CD4-positive, alpha-beta memory T cell (primary cell): ENCODE measurements at regions of chr1 and their contacts with region 1.

Region 1: GRCh38 chr1:154414606-154415005 is 9.5 kb downstream of the IL6R start:
- DNase-seq: no peak
- H3K4me3 ChIP-seq: no peak overlapping the region
- H3K4me3 Mint-ChIP-seq: peak overlapping the region in 6 of 8 donors; percentile 8 to 71 (median 20)
- H3K27ac ChIP-seq: peak overlapping the region; percentile 29
- H3K27ac Mint-ChIP-seq: peak overlapping the region in 6 of 7 donors; percentile 77 to 88 (median 86)
- H3K4me1 ChIP-seq: peaks cover 100% of the 10 kb centered on the region
- H3K4me1 Mint-ChIP-seq: peaks cover 45 to 100% (median 78%) of the 10 kb centered on the region in 4 donors
- H3K27me3 ChIP-seq: no peaks in the 10 kb centered on the region
- H3K27me3 Mint-ChIP-seq: no peaks in the 10 kb centered on the region

Region 2: GRCh38 chr1:154442006-154442740 is 27.6 kb after region 1 on chr1:
- CTCF ChIA-PET with region 1: interaction called, 16 read pairs
- POLR2A ChIA-PET with region 1: interaction called, 145 read pairs
- intact Hi-C with region 1: no loop called
- DNase-seq: no peak
- H3K4me3 ChIP-seq: no peak overlapping the region
- H3K4me3 Mint-ChIP-seq: peak overlapping the region; percentile 32 to 87 (median 76)
- H3K27ac ChIP-seq: peak overlapping the region; percentile 47
- H3K27ac Mint-ChIP-seq: peak overlapping the region; percentile 81 to 99 (median 94)
- H3K4me1 ChIP-seq: peaks cover 69% of the 10 kb centered on the region
- H3K4me1 Mint-ChIP-seq: peaks cover 47 to 75% (median 64%) of the 10 kb centered on the region in 4 donors
- H3K27me3 ChIP-seq: no peaks in the 10 kb centered on the region
- H3K27me3 Mint-ChIP-seq: no peaks in the 10 kb centered on the region